ENCODE measurements at regions of chrX and their contacts with region 1.

Region 1: DNA sequence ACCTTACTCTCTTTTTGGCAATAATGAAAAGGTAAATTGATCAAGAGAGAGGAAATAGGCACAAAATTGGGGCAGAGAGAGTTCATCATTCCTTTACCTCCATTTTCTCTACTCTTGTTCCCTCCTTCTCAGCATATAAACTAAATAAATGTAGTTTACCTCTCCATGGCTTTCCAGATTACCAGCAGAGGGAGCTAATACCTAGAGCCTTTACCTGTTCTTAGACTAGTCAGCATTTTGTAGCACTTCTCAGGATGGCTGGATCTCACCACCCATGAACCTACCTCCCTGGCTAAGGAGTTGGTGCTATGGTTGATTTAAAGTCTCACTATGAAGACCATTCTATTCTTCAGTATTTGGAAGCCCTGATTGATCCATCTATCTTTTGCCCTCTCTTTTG is 15.7 kb downstream of the OFD1 start:
- DNase-seq: no peak
- H3K4me3 ChIP-seq: no peak overlapping the region
- H3K27ac ChIP-seq: no peak overlapping the region
- H3K4me1 ChIP-seq: no peaks in the 10 kb centered on the region
- H3K27me3 ChIP-seq: no peaks in the 10 kb centered on the region
- CTCF ChIP-seq: peak; percentile 46 to 60 (median 47)

Region 2: DNA sequence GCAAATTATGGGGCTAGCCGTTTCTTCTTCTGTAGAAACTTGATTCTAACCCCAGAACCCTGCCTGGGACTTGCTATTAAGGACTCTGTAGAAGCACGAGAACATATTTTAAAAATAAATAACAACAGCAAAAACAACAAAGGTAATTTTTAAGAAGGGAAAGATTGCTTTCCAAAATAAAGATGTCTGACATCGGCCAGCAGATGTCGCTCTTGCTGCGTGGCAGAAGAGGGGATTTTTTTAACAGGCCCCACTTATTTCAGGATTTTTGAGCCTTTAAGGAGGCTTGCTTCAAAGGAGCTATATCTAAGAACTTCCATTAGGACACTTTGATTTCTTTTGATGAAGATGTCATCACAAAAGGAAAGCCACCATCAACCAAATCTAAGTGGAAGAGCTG is 243.6 kb before region 1 on chrX:
- intact Hi-C with region 1: loop called (anchors 5 kb)
- DNase-seq: no peak
- H3K4me3 ChIP-seq: no peak overlapping the region
- H3K27ac ChIP-seq: no peak overlapping the region
- H3K4me1 ChIP-seq: no peaks in the 10 kb centered on the region
- H3K27me3 ChIP-seq: no peaks in the 10 kb centered on the region
- CTCF ChIP-seq: peak; percentile 58 to 84 (median 82)